ENCODE measurements at regions of chr9 and their contacts with region 1.

Region 1: GRCh38 chr9:35657546-35658136 is at the start of gene RMRP:
- DNase-seq: peak; percentile 63 to 97 (median 77)
- ATAC-seq: peak; percentile 75
- H3K4me3 ChIP-seq: peak within 1 kb of the TSS; percentile 88
- H3K4me3 Mint-ChIP-seq: peak within 1 kb of the TSS; percentile 96
- H3K27ac ChIP-seq: peak within 1 kb of the TSS; percentile 99 to 100
- H3K27ac Mint-ChIP-seq: peak within 1 kb of the TSS; percentile 100
- H3K4me1 ChIP-seq: peaks cover 73% of the 10 kb centered on the region
- H3K4me1 Mint-ChIP-seq: peaks cover 69% of the 10 kb centered on the region
- H3K27me3 ChIP-seq: no peaks in the 10 kb centered on the region
- H3K27me3 Mint-ChIP-seq: peaks cover 8% of the 10 kb centered on the region
- CTCF ChIP-seq: no peak
- total RNA-seq, gene RMRP: 14,857 to 24,615 TPM

Region 2: DNA sequence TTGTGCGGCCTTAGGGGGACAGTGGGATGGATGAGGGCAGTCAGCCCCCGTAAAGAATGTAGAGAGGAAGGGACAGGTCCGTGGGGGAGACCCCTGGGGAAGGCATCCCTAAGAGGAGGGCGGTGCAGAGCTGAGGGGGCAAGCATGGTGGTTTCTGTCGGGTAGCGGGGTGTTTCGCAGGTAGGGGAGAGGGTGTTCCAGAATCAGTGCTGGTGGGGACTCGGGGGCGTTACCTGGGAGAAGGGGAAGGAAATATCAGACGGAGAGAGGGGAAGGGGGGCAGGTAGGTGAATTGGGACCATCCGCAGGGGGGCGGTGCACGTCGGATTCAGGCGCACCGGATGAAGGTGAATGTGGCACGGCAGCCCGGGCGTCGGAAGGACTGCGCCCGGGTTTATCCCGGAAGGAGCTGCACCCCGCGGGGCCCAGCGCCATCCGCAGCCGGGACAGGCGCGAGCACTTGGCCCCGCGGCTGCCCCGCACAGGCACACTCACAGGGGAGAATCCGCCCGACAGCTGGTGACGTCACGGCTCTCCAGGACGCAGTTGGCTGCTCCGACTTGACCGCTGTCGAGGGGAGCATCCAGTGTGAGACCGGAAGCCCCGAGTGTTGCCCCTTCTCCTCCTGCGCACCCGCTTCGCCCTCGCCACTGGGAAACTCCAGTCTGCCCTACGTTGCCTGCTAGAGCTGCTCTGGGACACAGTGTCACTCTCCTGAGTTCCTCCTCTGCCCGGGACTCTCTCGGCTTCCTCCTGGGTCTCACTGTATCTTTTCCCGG is 40.8 kb before region 1 on chr9:
- CTCF ChIA-PET with region 1: interaction called, 22 read pairs
- POLR2A ChIA-PET with region 1: interaction called, 20 read pairs
- intact Hi-C with region 1: loop called (anchors 5 kb)
- DNase-seq: peak; percentile 42 to 89 (median 62)
- ATAC-seq: peak; percentile 86
- H3K4me3 ChIP-seq: peak overlapping the region; percentile 77
- H3K4me3 Mint-ChIP-seq: peak overlapping the region; percentile 86
- H3K27ac ChIP-seq: peak overlapping the region; percentile 27 to 70
- H3K27ac Mint-ChIP-seq: peak overlapping the region; percentile 72
- H3K4me1 ChIP-seq: peaks cover 40% of the 10 kb centered on the region
- H3K4me1 Mint-ChIP-seq: peaks cover 50% of the 10 kb centered on the region
- H3K27me3 ChIP-seq: no peaks in the 10 kb centered on the region
- H3K27me3 Mint-ChIP-seq: no peaks in the 10 kb centered on the region
- CTCF ChIP-seq: peak; percentile 47

Region 3: DNA sequence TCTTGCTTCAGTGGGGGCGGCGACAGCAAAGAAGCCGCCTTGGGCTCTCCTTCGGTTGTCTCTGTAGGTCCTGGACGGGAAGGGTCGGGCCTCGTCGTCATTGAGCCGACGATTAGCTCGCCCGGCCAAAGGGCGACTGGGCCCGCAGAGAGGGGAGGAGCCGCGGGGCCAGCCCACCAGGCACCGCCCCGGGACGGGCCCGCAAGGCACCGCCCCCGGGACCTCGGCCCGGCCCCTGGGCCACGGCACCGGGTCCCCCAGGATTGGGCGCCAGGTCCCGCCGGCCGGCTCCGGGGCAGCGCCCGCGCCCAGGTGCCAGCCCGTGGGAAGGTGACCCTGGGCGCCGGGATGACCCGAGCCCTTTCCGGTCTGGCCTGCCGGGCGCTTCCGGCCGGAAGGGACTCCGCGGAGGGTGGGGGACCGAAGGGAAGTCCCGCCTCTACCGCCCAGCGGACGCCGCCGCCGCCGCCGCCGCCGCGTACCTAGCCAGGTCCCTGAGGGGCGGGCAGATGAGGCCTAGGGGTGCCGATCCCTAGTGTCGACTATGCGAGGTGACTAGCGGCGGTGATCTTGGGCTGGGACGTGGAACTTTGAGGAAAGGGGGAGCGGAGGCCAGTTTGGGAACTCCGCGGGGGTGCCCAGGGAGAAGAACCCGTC is 91.3 kb after region 1 on chr9 and contains the starts of genes GBA2 and RGP1:
- CTCF ChIA-PET with region 1: interaction called, 8 read pairs
- POLR2A ChIA-PET with region 1: interaction called, 19 read pairs
- intact Hi-C with region 1: no loop called
- DNase-seq: peak; percentile 25 to 77 (median 58)
- ATAC-seq: peak; percentile 59
- H3K4me3 ChIP-seq: peak within 1 kb of the TSS; percentile 98
- H3K4me3 Mint-ChIP-seq: peak within 1 kb of the TSS; percentile 99
- H3K27ac ChIP-seq: peak within 1 kb of the TSS; percentile 65 to 85
- H3K27ac Mint-ChIP-seq: peak within 1 kb of the TSS; percentile 88
- H3K4me1 ChIP-seq: peaks cover 48% of the 10 kb centered on the region
- H3K4me1 Mint-ChIP-seq: peaks cover 51% of the 10 kb centered on the region
- H3K27me3 ChIP-seq: no peaks in the 10 kb centered on the region
- H3K27me3 Mint-ChIP-seq: no peaks in the 10 kb centered on the region
- CTCF ChIP-seq: no peak
- total RNA-seq, gene GBA2: 17.3 to 18.6 TPM
- total RNA-seq, gene RGP1: 12.6 to 13.1 TPM

Region 4: GRCh38 chr9:35829084-35829763 is 171.6 kb after region 1 on chr9 and contains the start of gene TMEM8B:
- CTCF ChIA-PET with region 1: no interaction called
- POLR2A ChIA-PET with region 1: no interaction called
- intact Hi-C with region 1: loop called in 1 of 2 experiments (anchors 5 kb)
- DNase-seq: peak; percentile 89 to 98 (median 94)
- ATAC-seq: peak; percentile 94
- H3K4me3 ChIP-seq: peak within 1 kb of the TSS; percentile 92
- H3K4me3 Mint-ChIP-seq: peak within 1 kb of the TSS; percentile 97
- H3K27ac ChIP-seq: peak within 1 kb of the TSS; percentile 44 to 47
- H3K27ac Mint-ChIP-seq: peak within 1 kb of the TSS; percentile 83
- H3K4me1 ChIP-seq: peaks cover 35% of the 10 kb centered on the region
- H3K4me1 Mint-ChIP-seq: peaks cover 40% of the 10 kb centered on the region
- H3K27me3 ChIP-seq: no peaks in the 10 kb centered on the region
- H3K27me3 Mint-ChIP-seq: no peaks in the 10 kb centered on the region
- CTCF ChIP-seq: no peak
- total RNA-seq, gene TMEM8B: 8.9 to 9.6 TPM

Region 5: GRCh38 chr9:36036780-36037548 is 379.3 kb after region 1 on chr9 and contains the start of gene RECK:
- CTCF ChIA-PET with region 1: no interaction called
- POLR2A ChIA-PET with region 1: no interaction called
- intact Hi-C with region 1: no loop called
- DNase-seq: peak; percentile 68 to 92 (median 84)
- ATAC-seq: peak; percentile 94
- H3K4me3 ChIP-seq: peak within 1 kb of the TSS; percentile 85
- H3K4me3 Mint-ChIP-seq: peak within 1 kb of the TSS; percentile 94
- H3K27ac ChIP-seq: no peak within 1 kb of the TSS
- H3K27ac Mint-ChIP-seq: peak within 1 kb of the TSS; percentile 44
- H3K4me1 ChIP-seq: peaks cover 22% of the 10 kb centered on the region
- H3K4me1 Mint-ChIP-seq: peaks cover 45% of the 10 kb centered on the region
- H3K27me3 ChIP-seq: no peaks in the 10 kb centered on the region
- H3K27me3 Mint-ChIP-seq: no peaks in the 10 kb centered on the region
- CTCF ChIP-seq: no peak
- total RNA-seq, gene RECK: 9.3 to 9.8 TPM